CD8-positive, alpha-beta T cell (primary cell): ENCODE measurements at regions of chr14 and their contacts with region 1.

Region 1: DNA sequence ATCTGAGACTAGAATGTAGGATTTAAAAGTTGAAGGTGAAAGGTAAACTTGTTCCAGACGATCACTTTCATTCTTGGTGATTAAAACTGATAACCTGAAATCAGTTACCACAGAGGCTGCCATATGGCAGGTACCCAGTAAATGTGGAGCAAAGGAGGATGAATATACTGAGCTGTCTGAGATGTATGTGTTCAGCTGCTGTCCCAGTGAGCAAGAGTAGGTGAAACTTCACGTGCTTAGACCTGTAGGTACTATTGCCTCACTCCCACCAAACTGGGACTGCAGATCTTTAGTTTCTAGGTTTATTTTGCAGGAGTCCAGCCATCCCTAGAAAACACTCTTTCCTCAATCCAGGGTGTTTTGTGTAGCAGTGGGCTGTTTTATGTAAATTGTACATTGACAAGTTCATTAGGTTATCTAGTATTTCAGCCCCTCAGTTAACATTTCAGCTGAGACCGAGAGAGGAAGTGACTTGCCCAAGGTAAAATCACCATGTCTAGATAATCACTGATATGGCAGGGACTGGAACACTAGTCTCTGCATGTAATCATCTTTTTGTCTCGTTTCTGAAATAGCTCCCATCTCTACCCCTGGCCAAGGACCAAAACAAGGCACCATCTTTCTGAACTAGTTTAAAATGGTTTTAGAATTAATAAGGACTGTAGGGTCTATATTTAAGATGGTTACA is 62.7 kb downstream of the ATG14 start:
- DNase-seq: no peak
- ATAC-seq: no peak
- H3K4me3 ChIP-seq: no peak overlapping the region
- H3K4me3 Mint-ChIP-seq: no peak overlapping the region
- H3K27ac ChIP-seq: no peak overlapping the region
- H3K27ac Mint-ChIP-seq: peak overlapping the region; percentile 71
- H3K4me1 ChIP-seq: no peaks in the 10 kb centered on the region
- H3K4me1 Mint-ChIP-seq: peaks cover 49% of the 10 kb centered on the region
- H3K27me3 ChIP-seq: no peaks in the 10 kb centered on the region
- H3K27me3 Mint-ChIP-seq: no peaks in the 10 kb centered on the region
- CTCF ChIP-seq: no peak

Region 2: GRCh38 chr14:55245657-55246268 is 103.1 kb before region 1 on chr14:
- CTCF ChIA-PET with region 1: interaction called, 31 read pairs
- POLR2A ChIA-PET with region 1: no interaction called
- intact Hi-C with region 1: loop called (anchors 1 kb)
- DNase-seq: peak in 5 of 9 experiments; percentile 7 to 66 (median 32)
- ATAC-seq: peak; percentile 52
- H3K4me3 ChIP-seq: no peak overlapping the region
- H3K4me3 Mint-ChIP-seq: no peak overlapping the region
- H3K27ac ChIP-seq: no peak overlapping the region
- H3K27ac Mint-ChIP-seq: no peak overlapping the region
- H3K4me1 ChIP-seq: no peaks in the 10 kb centered on the region
- H3K4me1 Mint-ChIP-seq: no peaks in the 10 kb centered on the region
- H3K27me3 ChIP-seq: no peaks in the 10 kb centered on the region
- H3K27me3 Mint-ChIP-seq: peaks cover 13% of the 10 kb centered on the region
- CTCF ChIP-seq: peak; percentile 61